ENCODE measurements at regions of chr9 and their contacts with region 1.

Region 1: GRCh38 chr9:101925498-101925897 is 187.1 kb upstream of the GRIN3A start:
- DNase-seq: no peak
- ATAC-seq: no peak
- H3K4me3 ChIP-seq: no peak overlapping the region
- H3K27ac ChIP-seq: no peak overlapping the region
- H3K4me1 ChIP-seq: no peaks in the 10 kb centered on the region
- H3K27me3 ChIP-seq: no peaks in the 10 kb centered on the region
- CTCF ChIP-seq: no peak
- POLR2A ChIP-seq: no peak
- RAD21 ChIP-seq: no peak

Region 2: GRCh38 chr9:101778332-101778731 is 147.2 kb before region 1 on chr9:
- CTCF ChIA-PET with region 1: no interaction called
- POLR2A ChIA-PET with region 1: no interaction called
- dilution Hi-C with region 1: no loop called
- in situ Hi-C with region 1: no loop called
- intact Hi-C with region 1: no loop called
- DNase-seq: no peak
- ATAC-seq: no peak
- H3K4me3 ChIP-seq: no peak overlapping the region
- H3K27ac ChIP-seq: no peak overlapping the region
- H3K4me1 ChIP-seq: no peaks in the 10 kb centered on the region
- H3K27me3 ChIP-seq: no peaks in the 10 kb centered on the region
- CTCF ChIP-seq: no peak
- POLR2A ChIP-seq: no peak
- RAD21 ChIP-seq: no peak

Region 3: GRCh38 chr9:103003689-103004088 is 1078.2 kb after region 1 on chr9:
- CTCF ChIA-PET with region 1: no interaction called
- POLR2A ChIA-PET with region 1: interaction called, 10 read pairs
- dilution Hi-C with region 1: no loop called
- in situ Hi-C with region 1: no loop called
- intact Hi-C with region 1: no loop called
- DNase-seq: no peak
- ATAC-seq: no peak
- H3K4me3 ChIP-seq: no peak overlapping the region
- H3K27ac ChIP-seq: no peak overlapping the region
- H3K4me1 ChIP-seq: no peaks in the 10 kb centered on the region
- H3K27me3 ChIP-seq: no peaks in the 10 kb centered on the region
- CTCF ChIP-seq: no peak
- POLR2A ChIP-seq: no peak
- RAD21 ChIP-seq: no peak

Measured in IMR-90 (cell line).